ENCODE measurements at regions of chr6 and their contacts with region 1.

Region 1: GRCh38 chr6:137089305-137089704 is 44.5 kb upstream of the IL20RA start:
- DNase-seq: no peak
- ATAC-seq: no peak
- H3K4me3 ChIP-seq: no peak overlapping the region
- H3K27ac ChIP-seq: no peak overlapping the region
- H3K4me1 ChIP-seq: peaks cover 5% of the 10 kb centered on the region; the same call in 1 of the 3 replicates
- CTCF ChIP-seq: no peak
- EP300 ChIP-seq: no peak
- POLR2A ChIP-seq: no peak
- RAD21 ChIP-seq: no peak

Region 2: GRCh38 chr6:137001299-137001976 is 87.9 kb before region 1 on chr6:
- CTCF ChIA-PET with region 1: no interaction called
- POLR2A ChIA-PET with region 1: no interaction called
- DNase-seq: peak; percentile 31 to 53
- ATAC-seq: peak; percentile 51 to 77; a peak in 4 of 6 replicates
- H3K4me3 ChIP-seq: no peak overlapping the region
- H3K27ac ChIP-seq: peak overlapping the region; percentile 50 to 84; a peak in 5 of 6 replicates
- H3K4me1 ChIP-seq: peaks cover 20% of the 10 kb centered on the region
- CTCF ChIP-seq: no peak
- EP300 ChIP-seq: no peak
- POLR2A ChIP-seq: no peak
- RAD21 ChIP-seq: no peak

Region 3: DNA sequence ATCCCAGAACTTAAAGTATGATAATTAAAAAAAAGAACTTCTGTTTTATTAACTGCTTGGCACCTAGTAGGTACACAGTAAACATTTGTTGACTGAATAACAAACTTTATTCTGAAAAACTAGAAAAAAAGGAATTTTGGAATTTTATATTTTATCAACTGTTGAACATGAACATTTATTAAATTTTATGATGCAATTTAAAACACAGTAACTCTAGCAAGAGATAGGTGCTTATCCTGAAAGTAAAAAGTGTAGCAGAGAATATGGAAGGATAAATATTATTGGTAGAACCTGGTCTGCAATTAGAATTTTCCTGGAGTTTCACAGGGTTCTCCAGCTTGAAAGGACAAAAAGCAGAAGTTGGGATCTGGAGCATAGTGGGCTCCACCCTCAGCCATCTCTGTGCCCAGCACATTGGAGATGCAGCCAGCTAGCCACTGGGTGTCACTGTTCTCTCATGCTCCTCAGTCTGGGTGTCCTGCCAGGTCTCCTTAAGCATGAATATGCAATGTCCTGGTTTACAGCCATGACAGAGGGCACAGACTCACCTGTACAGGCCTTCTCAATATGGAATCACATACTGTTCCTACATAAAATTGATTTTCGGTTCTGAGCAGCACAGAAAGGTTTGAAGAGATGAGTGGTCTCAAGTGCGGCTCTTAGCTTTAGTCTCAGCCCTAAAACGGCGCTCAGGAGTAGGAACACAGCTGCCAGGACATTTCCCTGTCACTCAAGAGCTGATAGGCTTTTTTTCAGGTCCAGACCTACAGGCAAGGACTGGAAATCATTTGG is 12.8 kb before region 1 on chr6:
- CTCF ChIA-PET with region 1: interaction called, 12 read pairs
- POLR2A ChIA-PET with region 1: no interaction called
- DNase-seq: peak; percentile 28 to 71
- ATAC-seq: peak; percentile 99 to 100
- H3K4me3 ChIP-seq: no peak overlapping the region
- H3K27ac ChIP-seq: no peak overlapping the region
- H3K4me1 ChIP-seq: no peaks in the 10 kb centered on the region
- CTCF ChIP-seq: peak; percentile 68
- EP300 ChIP-seq: no peak
- POLR2A ChIP-seq: no peak
- RAD21 ChIP-seq: peak; percentile 80

Region 4: DNA sequence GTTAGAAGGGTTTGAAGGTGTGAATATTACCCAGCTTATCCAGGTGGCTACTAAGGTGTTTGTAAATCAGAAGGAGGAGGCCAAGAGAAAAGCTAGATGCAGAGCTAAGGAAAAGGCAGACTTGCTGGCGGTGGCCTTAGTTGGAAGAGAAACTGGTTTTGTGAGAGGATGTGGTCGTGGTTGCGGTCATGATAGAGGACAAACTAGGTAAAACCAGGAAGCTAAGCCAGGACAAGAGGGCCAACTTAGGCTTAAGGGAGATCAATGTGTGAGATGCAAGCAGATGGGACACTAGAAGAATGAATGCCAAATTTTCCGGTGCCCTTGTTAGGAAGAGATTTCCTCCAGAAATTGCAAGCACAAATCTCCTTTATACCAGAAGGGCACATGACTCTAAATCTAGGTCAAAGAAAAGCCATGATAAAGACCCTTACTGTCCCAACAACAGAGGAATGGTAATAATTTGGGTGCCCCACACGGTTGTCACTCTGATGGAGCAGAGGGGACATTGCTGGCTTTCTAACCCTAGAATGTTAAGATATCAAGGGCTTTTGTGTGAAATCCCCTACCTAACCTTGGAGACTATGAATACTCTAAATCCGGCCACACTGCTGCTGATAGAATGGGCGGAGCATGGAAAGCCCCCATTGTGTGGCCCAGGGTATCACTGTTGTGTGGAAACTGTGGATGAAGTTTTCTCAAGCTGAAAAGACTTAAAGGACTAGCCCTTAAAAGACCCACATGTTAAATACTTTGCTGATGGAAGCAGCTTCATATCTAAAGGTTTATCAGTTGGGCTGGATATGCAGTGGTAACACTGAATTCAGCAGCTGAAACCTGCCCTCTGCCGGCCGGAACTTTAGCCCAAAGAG is 76.3 kb after region 1 on chr6:
- CTCF ChIA-PET with region 1: interaction called, 36 read pairs
- POLR2A ChIA-PET with region 1: no interaction called
- DNase-seq: peak; percentile 15 to 37
- ATAC-seq: peak; percentile 74 to 83; a peak in 4 of 6 replicates
- H3K4me3 ChIP-seq: no peak overlapping the region
- H3K27ac ChIP-seq: 0 out of 6 replicates have a peak overlapping the region, but pooled peaks of 1 of the 2 experiments have one; percentile 49
- H3K4me1 ChIP-seq: peaks cover 16% of the 10 kb centered on the region
- CTCF ChIP-seq: peak; percentile 40
- EP300 ChIP-seq: no peak
- POLR2A ChIP-seq: no peak
- RAD21 ChIP-seq: peak; percentile 50 to 63

Region 5: DNA sequence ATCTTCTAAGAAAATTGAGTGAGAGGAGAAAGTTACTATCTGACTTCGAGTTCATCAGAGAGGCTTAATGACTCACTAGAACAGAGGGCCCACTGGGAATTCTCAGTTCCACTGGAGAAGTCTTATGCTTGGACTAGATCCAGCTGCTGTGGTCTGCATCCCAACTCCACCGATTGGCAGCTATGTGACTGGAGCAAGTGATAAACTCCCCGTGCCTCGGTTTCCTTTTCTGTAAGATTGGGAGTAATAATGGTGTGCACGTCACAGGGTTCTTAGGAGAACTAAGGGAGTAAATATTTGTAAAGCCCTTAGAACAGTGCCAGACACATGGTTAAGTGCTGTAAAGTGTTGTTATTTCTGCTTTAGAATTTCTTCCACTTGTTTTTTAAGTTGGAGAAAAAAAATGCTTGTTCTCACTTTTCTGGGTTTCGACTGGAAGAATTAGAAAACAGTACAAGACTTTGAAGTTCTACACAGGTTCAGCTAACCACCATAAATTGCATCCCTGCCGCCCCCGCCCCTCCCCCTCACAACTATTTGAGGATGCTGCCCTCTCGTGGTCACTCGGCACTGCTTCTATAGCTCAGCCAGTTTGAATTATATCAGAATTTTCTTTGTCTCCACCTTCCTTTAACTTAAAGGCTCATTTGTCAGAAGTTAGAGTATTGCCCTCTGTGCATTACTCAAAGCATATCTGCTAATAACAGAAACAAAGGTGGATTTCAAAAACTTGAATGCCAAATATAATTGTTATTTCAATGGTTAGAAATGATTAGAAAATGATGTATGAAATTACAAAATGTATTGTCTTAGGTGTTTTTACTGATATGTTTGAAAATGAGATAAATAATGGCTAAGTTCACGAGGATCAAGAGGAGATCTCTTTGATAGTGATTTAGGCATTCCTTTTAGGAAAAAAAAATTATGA is 224.9 kb after region 1 on chr6:
- CTCF ChIA-PET with region 1: interaction called, 33 read pairs
- POLR2A ChIA-PET with region 1: no interaction called
- DNase-seq: peak; percentile 25 to 66
- ATAC-seq: peak; percentile 70 to 82; a peak in 5 of 6 replicates
- H3K4me3 ChIP-seq: no peak overlapping the region
- H3K27ac ChIP-seq: peak overlapping the region; percentile 6 to 9; a peak in 1 of 6 replicates
- H3K4me1 ChIP-seq: peaks cover 21% of the 10 kb centered on the region
- CTCF ChIP-seq: peak; percentile 74
- EP300 ChIP-seq: no peak
- POLR2A ChIP-seq: no peak
- RAD21 ChIP-seq: peak; percentile 82 to 83

Measured in A549 (cell line).